Activated B cell treated with CpG ODN at 0.5 μM for 24 hours (primary cell): ENCODE measurements at regions of chr11 and their contacts with region 1.

Region 1: GRCh38 chr11:85854557-85855340 is 434 bp upstream of the CCDC83 start:
- DNase-seq: peak; percentile 88
- ATAC-seq: peak; percentile 91
- H3K4me3 Mint-ChIP-seq: peak overlapping the region; percentile 90
- H3K27ac Mint-ChIP-seq: peak overlapping the region; percentile 79
- H3K4me1 Mint-ChIP-seq: peaks cover 8% of the 10 kb centered on the region
- H3K27me3 Mint-ChIP-seq: peaks cover 3% of the 10 kb centered on the region
- CTCF ChIP-seq: peak; percentile 65

Region 2: GRCh38 chr11:85517272-85517671 is 337.5 kb before region 1 on chr11:
- CTCF ChIA-PET with region 1: no interaction called
- POLR2A ChIA-PET with region 1: no interaction called
- intact Hi-C with region 1: no loop called
- DNase-seq: no peak
- ATAC-seq: no peak
- H3K4me3 Mint-ChIP-seq: no peak overlapping the region
- H3K27ac Mint-ChIP-seq: no peak overlapping the region
- H3K4me1 Mint-ChIP-seq: peaks cover 3% of the 10 kb centered on the region
- H3K27me3 Mint-ChIP-seq: no peaks in the 10 kb centered on the region
- CTCF ChIP-seq: no peak

Region 3: DNA sequence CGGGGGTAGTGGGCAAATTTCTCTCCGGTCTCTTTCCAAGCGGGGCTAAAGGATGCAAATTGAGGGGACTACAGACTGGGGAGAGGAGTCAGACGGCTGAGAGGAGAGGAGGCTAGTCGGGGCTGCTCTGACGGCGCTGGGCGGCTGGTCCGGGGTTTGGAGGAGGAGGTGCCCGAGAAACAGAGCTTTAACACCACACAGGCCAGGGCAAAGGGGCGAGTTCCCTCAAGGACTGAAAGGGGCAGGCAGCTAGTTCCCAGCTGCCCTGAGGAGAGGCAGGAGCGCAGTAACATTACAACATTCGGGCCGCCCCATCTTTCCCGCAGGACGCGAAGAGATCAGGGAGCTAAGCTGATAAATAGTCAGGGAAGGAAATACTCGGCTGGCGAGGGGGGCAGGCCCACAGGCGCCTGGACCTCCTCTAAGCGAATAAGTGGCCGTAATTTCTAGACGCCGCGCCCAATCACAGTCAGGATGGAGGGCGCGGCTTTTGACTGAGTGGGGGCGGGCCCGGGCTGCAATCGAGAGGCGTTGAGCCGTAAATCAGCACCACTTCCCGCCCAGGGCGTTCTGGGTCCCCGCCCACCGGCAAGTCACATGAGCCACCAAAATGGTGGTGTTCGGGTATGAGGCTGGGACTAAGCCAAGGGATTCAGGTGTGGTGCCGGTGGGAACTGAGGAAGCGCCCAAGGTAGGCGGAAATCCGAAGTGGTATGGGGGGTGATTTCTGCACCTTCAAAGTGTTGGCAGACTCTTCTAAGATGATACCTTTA is 226.6 kb before region 1 on chr11 and contains the start of gene TMEM126B:
- CTCF ChIA-PET with region 1: no interaction called
- POLR2A ChIA-PET with region 1: interaction called, 5 read pairs
- intact Hi-C with region 1: loop called (anchors 1 kb)
- DNase-seq: peak; percentile 89
- ATAC-seq: peak; percentile 98
- H3K4me3 Mint-ChIP-seq: peak within 1 kb of the TSS; percentile 99
- H3K27ac Mint-ChIP-seq: peak within 1 kb of the TSS; percentile 94
- H3K4me1 Mint-ChIP-seq: peaks cover 28% of the 10 kb centered on the region
- H3K27me3 Mint-ChIP-seq: peaks cover 2% of the 10 kb centered on the region
- CTCF ChIP-seq: no peak
- total RNA-seq, gene TMEM126B: 35.5 and 43.4 TPM in 2 replicates

Region 4: DNA sequence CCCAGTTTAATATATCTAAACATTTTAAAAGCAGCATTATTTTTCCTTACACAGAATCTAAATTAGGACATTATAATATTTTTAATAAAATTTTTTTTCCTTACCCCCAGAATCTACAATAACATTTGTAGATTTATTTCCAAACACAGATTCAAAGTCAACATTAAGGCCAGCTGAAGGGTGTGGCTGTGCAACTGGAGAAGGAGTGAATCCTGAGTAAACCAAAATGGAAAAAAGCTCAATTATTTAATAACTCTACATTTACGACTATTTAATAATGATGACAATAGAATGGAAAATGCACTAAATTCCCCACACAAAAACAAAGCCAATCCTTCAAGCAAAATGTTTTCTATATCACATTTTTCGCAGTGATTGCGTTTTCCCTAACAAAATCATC is 129.0 kb after region 1 on chr11:
- CTCF ChIA-PET with region 1: interaction called, 3 read pairs
- POLR2A ChIA-PET with region 1: no interaction called
- intact Hi-C with region 1: loop called (anchors 5 kb)
- DNase-seq: no peak
- ATAC-seq: no peak
- H3K4me3 Mint-ChIP-seq: no peak overlapping the region
- H3K27ac Mint-ChIP-seq: no peak overlapping the region
- H3K4me1 Mint-ChIP-seq: peaks cover 2% of the 10 kb centered on the region
- H3K27me3 Mint-ChIP-seq: no peaks in the 10 kb centered on the region
- CTCF ChIP-seq: no peak

Region 5: GRCh38 chr11:86218125-86219084 is 363.7 kb after region 1 on chr11:
- CTCF ChIA-PET with region 1: interaction called, 3 read pairs
- POLR2A ChIA-PET with region 1: no interaction called
- intact Hi-C with region 1: loop called (anchors 2 kb)
- DNase-seq: no peak
- ATAC-seq: peak; percentile 22
- H3K4me3 Mint-ChIP-seq: peak overlapping the region; percentile 69
- H3K27ac Mint-ChIP-seq: peak overlapping the region; percentile 94
- H3K4me1 Mint-ChIP-seq: peaks cover 48% of the 10 kb centered on the region
- H3K27me3 Mint-ChIP-seq: no peaks in the 10 kb centered on the region
- CTCF ChIP-seq: peak; percentile 32

Region 6: DNA sequence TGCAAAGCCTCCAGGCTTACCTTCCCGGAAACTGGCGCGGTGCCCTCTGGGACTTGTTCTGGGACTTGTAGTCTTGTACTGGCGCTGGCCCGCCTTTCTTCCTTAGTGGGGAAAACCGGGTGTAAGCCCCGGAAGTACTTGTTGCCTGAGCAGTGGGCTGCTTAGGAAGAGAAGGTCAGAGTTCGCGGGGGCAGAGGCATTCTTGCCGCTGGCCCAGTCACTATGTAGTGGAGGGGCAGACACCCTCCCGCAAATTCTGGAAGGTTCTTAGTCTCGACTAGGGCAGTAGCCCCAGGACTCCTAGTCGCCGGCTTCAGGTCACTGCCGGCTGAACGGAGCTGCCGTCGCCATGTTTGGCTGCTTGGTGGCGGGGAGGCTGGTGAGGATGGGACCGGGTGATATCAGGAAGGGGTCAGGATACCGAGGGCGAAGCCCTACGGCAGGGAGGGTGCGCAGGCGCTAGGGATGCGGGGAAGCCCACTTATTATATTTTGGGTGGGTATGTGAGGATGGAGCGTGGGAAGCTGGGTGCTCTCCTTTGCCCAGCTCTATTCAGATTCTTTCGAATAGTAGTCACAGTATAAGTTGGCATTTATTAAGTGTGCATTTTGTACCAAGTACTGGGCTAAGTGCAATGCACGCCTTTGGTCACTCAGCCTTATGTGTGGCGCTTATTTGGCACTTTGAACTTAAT is 447.5 kb after region 1 on chr11 and contains the start of gene HIKESHI:
- CTCF ChIA-PET with region 1: interaction called, 4 read pairs
- POLR2A ChIA-PET with region 1: interaction called, 4 read pairs
- intact Hi-C with region 1: loop called (anchors 1 kb)
- DNase-seq: peak; percentile 72
- ATAC-seq: peak; percentile 98
- H3K4me3 Mint-ChIP-seq: peak within 1 kb of the TSS; percentile 99
- H3K27ac Mint-ChIP-seq: peak within 1 kb of the TSS; percentile 94
- H3K4me1 Mint-ChIP-seq: peaks cover 27% of the 10 kb centered on the region
- H3K27me3 Mint-ChIP-seq: no peaks in the 10 kb centered on the region
- CTCF ChIP-seq: no peak
- total RNA-seq, gene HIKESHI: 33.8 and 35.6 TPM in 2 replicates

Region 7: DNA sequence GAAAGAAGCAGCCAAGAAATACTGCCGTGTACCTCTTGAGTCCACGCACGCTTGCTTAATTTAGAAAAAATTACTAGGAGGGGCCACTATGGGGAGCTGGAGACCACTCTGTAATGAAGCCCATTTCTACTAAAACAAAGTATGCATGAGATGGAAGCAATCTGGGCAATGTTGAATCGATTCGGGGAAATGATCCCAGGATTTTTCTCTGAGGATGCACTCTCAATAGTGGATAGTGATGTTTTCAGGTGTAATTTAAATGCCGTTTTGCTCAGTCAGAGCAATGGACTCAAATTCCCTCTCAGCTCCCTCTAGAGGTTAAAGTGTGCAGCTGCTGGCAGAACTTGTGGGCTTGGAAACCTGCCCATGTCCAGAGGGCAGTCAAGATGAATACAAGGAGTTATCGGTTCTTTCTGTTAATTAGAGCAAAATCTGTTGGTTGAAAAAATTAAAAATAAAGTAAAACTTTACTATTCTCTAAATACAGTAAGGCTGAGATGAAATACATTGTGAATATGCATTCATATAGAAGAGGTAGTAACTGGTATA is 753.6 kb after region 1 on chr11:
- CTCF ChIA-PET with region 1: interaction called, 8 read pairs
- POLR2A ChIA-PET with region 1: no interaction called
- intact Hi-C with region 1: loop called (anchors 1 kb)
- DNase-seq: no peak
- ATAC-seq: peak; percentile 67
- H3K4me3 Mint-ChIP-seq: no peak overlapping the region
- H3K27ac Mint-ChIP-seq: no peak overlapping the region
- H3K4me1 Mint-ChIP-seq: no peaks in the 10 kb centered on the region
- H3K27me3 Mint-ChIP-seq: peaks cover 2% of the 10 kb centered on the region
- CTCF ChIP-seq: peak; percentile 94

Region 8: DNA sequence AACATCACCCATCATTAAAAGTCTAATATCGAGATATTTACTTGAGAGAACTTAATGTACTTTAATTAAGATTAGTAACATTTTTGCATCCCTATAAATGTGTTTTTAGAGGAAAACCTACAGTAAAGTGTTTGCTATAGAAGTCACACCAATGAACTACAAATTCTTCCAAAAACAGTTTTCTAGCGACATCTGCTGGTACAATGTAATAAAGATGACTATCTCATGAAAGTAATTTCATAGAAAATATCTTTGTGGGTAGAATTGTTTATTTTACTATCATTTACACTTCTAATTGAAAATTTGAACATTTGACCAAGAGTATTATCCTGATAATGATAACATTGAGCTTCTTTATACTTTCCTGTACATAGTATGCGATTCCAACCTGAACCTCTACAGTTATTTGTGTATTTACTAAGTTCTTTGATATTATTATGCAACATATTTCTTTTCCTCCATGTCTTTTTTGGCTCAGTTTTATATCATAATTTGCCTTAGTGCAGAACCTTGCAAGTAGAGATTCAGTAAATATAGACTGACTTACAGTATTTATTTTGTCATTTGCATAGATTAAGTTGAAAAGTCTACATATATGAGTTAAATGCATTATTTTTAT is 1435.7 kb after region 1 on chr11:
- CTCF ChIA-PET with region 1: no interaction called
- POLR2A ChIA-PET with region 1: no interaction called
- intact Hi-C with region 1: loop called (anchors 10 kb)
- DNase-seq: no peak
- ATAC-seq: no peak
- H3K4me3 Mint-ChIP-seq: no peak overlapping the region
- H3K27ac Mint-ChIP-seq: no peak overlapping the region
- H3K4me1 Mint-ChIP-seq: no peaks in the 10 kb centered on the region
- H3K27me3 Mint-ChIP-seq: no peaks in the 10 kb centered on the region
- CTCF ChIP-seq: peak; percentile 49